Activated T-helper 2 cell treated with anti-CD3 and anti-CD28 coated beads, Interferon-gamma antibody, Interleukin-2, Interleukin-4, amounts not matched to agents 10 μg/mL and 5 μg/mL and 100 μg/mL, durations not matched to agents 14 hours and 24 hours and 36 hours (primary cell): ENCODE measurements at regions of chr18 and their contacts with region 1.

Region 1: GRCh38 chr18:864872-865273 is 39.8 kb upstream of the ADCYAP1 start:
- DNase-seq: peak; percentile 43
- H3K4me3 Mint-ChIP-seq: no peak overlapping the region
- H3K27ac Mint-ChIP-seq: no peak overlapping the region
- H3K4me1 Mint-ChIP-seq: peaks cover 4% of the 10 kb centered on the region
- H3K27me3 Mint-ChIP-seq: peaks cover 33% of the 10 kb centered on the region

Region 2: GRCh38 chr18:961644-962355 is 96.9 kb after region 1 on chr18:
- intact Hi-C with region 1: loop called (anchors 2 kb)
- DNase-seq: peak; percentile 19
- H3K4me3 Mint-ChIP-seq: no peak overlapping the region
- H3K27ac Mint-ChIP-seq: no peak overlapping the region
- H3K4me1 Mint-ChIP-seq: no peaks in the 10 kb centered on the region
- H3K27me3 Mint-ChIP-seq: peaks cover 6% of the 10 kb centered on the region

Region 3: GRCh38 chr18:1663879-1664705 is 799.2 kb after region 1 on chr18:
- intact Hi-C with region 1: loop called (anchors 10 kb)
- DNase-seq: peak; percentile 9
- H3K4me3 Mint-ChIP-seq: no peak overlapping the region
- H3K27ac Mint-ChIP-seq: no peak overlapping the region
- H3K4me1 Mint-ChIP-seq: no peaks in the 10 kb centered on the region
- H3K27me3 Mint-ChIP-seq: no peaks in the 10 kb centered on the region

Region 4: GRCh38 chr18:2547477-2548087 is 1682.7 kb after region 1 on chr18:
- intact Hi-C with region 1: loop called (anchors 10 kb)
- DNase-seq: no peak
- H3K4me3 Mint-ChIP-seq: no peak overlapping the region
- H3K27ac Mint-ChIP-seq: no peak overlapping the region
- H3K4me1 Mint-ChIP-seq: no peaks in the 10 kb centered on the region
- H3K27me3 Mint-ChIP-seq: no peaks in the 10 kb centered on the region